Naive thymus-derived CD4-positive, alpha-beta T cell (primary cell): ENCODE measurements at regions of chr2 and their contacts with region 1.

Region 1: DNA sequence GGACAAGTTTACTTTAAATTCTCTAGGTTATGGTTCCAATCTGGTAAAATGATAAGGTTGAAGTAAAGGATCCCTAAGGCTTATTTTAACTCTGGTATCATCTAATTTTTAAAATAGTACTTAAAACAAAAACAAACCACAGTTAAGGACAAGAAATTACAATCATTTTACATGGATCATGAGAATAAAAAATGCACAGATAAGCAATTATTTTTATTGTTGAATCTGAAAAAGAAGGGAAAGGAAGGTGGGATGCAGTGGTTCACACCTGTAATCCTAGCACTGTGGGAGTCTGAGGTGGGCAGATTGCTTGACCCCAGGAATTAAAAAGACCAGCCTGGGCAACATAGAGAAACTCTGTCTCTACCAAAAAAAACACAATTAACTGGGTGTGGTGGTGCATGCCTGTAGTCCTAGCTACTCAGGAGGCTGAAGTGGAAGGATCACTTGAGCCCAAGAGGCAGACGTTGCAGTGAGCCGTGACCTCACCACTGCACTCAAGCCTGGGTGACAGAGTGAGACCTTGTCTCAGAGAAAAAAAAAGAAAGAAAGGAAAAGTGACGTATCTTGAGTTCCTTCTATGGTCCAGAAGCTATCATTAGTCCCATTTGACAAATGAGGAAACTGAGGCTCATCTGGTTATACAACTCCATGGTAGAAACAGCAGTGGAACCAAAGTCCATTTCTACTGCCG is 2.5 kb downstream of the TNFAIP6 start:
- DNase-seq: no peak
- ATAC-seq: no peak
- H3K4me3 ChIP-seq: no peak overlapping the region
- H3K4me3 Mint-ChIP-seq: no peak overlapping the region
- H3K27ac ChIP-seq: no peak overlapping the region
- H3K27ac Mint-ChIP-seq: no peak overlapping the region
- H3K4me1 ChIP-seq: no peaks in the 10 kb centered on the region
- H3K4me1 Mint-ChIP-seq: peaks cover 0 to 3% (median 0%) of the 10 kb centered on the region in 7 donors
- H3K27me3 ChIP-seq: no peaks in the 10 kb centered on the region
- H3K27me3 Mint-ChIP-seq: peaks cover 0 to 28% (median 7%) of the 10 kb centered on the region in 5 donors

Region 2: DNA sequence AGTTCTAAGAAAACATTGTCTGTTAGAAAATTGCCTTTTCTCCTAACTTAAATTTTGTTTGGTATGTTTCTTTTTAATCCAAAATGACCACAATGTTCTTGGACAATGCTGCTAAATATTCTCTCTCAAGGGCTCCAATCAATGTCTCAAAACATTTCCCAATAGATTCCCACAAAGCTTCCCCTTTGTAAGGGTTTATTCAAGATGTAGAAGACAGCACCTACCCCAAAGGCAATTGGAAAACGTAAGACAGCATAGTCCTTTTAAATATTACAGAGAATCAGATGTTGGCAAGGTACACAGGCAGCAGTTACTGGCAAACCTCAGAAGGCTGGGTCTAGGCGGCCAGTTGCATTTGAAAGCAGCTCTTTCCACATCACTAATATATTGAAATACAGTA is 31.5 kb after region 1 on chr2:
- CTCF ChIA-PET with region 1: no interaction called
- POLR2A ChIA-PET with region 1: no interaction called
- intact Hi-C with region 1: loop called in 1 of 2 experiments (anchors 1 kb)
- DNase-seq: no peak
- ATAC-seq: no peak
- H3K4me3 ChIP-seq: no peak overlapping the region
- H3K4me3 Mint-ChIP-seq: no peak overlapping the region
- H3K27ac ChIP-seq: no peak overlapping the region
- H3K27ac Mint-ChIP-seq: no peak overlapping the region
- H3K4me1 ChIP-seq: no peaks in the 10 kb centered on the region
- H3K4me1 Mint-ChIP-seq: peaks cover 0 to 4% (median 0%) of the 10 kb centered on the region in 7 donors
- H3K27me3 ChIP-seq: no peaks in the 10 kb centered on the region
- H3K27me3 Mint-ChIP-seq: peaks cover 0 to 7% (median 0%) of the 10 kb centered on the region in 5 donors